Posterior cingulate gyrus (tissue), 11 donors: ENCODE measurements at regions of chr7 and their contacts with region 1.

Region 1: GRCh38 chr7:152759949-152760853 is 649 bp downstream of the ACTR3B start:
- DNase-seq: peak; percentile 18 to 88 (median 42)

Region 2: DNA sequence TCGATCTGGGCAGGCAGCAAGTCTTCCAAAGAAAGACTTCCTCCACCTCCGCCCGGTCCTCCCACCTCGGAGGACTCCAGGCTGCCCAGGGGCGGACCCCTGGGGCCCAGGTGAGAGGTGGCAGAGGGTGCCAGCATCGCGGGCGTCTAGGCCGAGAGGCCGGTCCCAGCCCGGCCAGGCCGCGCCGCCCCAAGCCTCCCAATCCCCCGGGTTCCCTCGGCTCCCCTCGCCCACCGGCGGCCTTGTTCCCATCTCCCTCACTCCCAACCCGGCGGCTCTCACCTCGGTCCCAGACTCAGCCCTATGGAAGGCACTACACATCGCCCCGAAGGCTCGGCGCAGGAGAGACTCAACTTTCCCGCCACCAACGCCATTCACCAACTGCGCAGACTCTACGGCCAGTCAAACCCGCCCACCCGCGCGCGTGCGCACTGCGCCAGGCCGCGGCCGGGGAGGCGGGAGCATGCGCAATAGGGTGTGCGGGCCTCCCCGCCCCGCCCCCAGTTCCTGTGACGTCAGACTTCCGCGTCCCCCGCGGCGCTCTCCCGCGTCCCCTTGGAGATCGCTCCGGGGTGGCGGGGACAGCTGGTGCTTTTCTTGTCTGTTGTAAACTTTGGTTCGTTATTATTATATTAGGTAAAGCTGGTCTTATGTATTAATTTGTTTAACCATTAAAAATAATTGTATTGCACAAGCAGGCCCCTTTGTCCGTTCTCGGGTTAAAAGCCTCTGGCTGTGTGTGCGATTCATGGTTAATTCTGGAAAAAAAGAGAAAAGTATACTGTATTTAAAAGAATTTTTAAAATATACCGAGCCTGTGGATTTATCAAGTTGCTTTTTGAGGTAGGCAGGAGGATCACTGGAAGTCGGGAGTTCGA is 84.2 kb before region 1 on chr7 and contains the start of gene XRCC2:
- intact Hi-C with region 1: loop called (anchors 5 kb)
- DNase-seq: peak; percentile 78 to 98 (median 86)